Kidney (tissue), 22 donors: ENCODE measurements at regions of chr21 and their contacts with region 1.

Region 1: DNA sequence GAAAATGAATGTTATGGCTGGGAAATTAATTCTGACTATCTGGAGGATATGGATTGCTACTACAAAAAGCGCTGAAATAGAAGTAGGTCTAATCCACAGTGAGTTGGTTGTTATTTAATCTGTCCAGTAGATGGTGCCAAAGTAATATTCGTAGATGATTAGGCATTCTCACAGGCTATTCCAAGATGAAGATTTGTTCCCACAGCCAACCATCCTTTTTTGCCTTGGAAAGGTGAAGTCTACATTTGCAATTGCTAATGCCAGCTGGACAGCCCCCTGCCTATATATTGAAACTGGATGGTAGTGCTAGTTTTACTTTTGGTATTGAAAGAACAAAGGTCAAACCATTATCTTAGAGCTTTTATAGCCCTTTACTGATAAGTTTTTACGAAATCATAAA is 43.8 kb downstream of the RBM11 start:
- DNase-seq: peak in 2 of 5 donors; percentile 72 to 80
- H3K4me3 ChIP-seq: no peak overlapping the region
- H3K27ac ChIP-seq: no peak overlapping the region
- H3K4me1 ChIP-seq: no peaks in the 10 kb centered on the region
- H3K27me3 ChIP-seq: no peaks in the 10 kb centered on the region
- CTCF ChIP-seq: peak; percentile 55

Region 2: GRCh38 chr21:15592271-15592860 is 1332.6 kb after region 1 on chr21:
- intact Hi-C with region 1: loop called (anchors 10 kb)
- DNase-seq: peak in 2 of 5 donors; percentile 61 to 75
- H3K4me3 ChIP-seq: no peak overlapping the region
- H3K27ac ChIP-seq: no peak overlapping the region
- H3K4me1 ChIP-seq: no peaks in the 10 kb centered on the region
- H3K27me3 ChIP-seq: no peaks in the 10 kb centered on the region
- CTCF ChIP-seq: peak; percentile 54